GM10248 (cell line): ENCODE measurements at regions of chr17 and their contacts with region 1.

Region 1: GRCh38 chr17:73182616-73183310 is 10.1 kb upstream of the COG1 start:
- DNase-seq: no peak
- CTCF ChIP-seq: no peak

Region 2: GRCh38 chr17:73192894-73193701 is 10.3 kb after region 1 on chr17 and contains the start of gene COG1:
- CTCF ChIA-PET with region 1: interaction called, 25 read pairs
- POLR2A ChIA-PET with region 1: no interaction called
- DNase-seq: peak; percentile 96
- CTCF ChIP-seq: no peak